ENCODE measurements at regions of chr4 and their contacts with region 1.

Region 1: GRCh38 chr4:55444827-55445226 is 49.1 kb downstream of the TMEM165 start:
- DNase-seq: no peak
- H3K4me3 ChIP-seq: no peak overlapping the region
- H3K27ac ChIP-seq: no peak overlapping the region
- H3K4me1 ChIP-seq: no peaks in the 10 kb centered on the region
- H3K27me3 ChIP-seq: no peaks in the 10 kb centered on the region
- CTCF ChIP-seq: peak; percentile 14 to 44 (median 40); a peak in 3 of 4 replicates
- EP300 ChIP-seq: no peak
- POLR2A ChIP-seq: no peak
- RAD21 ChIP-seq: peak; percentile 50 to 67; a peak in 3 of 4 replicates

Region 2: GRCh38 chr4:55736605-55737183 is 291.9 kb after region 1 on chr4:
- CTCF ChIA-PET with region 1: interaction called, 10 read pairs
- POLR2A ChIA-PET with region 1: no interaction called
- DNase-seq: no peak
- H3K4me3 ChIP-seq: no peak overlapping the region
- H3K27ac ChIP-seq: no peak overlapping the region
- H3K4me1 ChIP-seq: no peaks in the 10 kb centered on the region
- H3K27me3 ChIP-seq: no peaks in the 10 kb centered on the region
- CTCF ChIP-seq: peak in 2 of 3 experiments; percentile 15 to 21; a peak in 2 of 4 replicates
- EP300 ChIP-seq: no peak
- POLR2A ChIP-seq: no peak
- RAD21 ChIP-seq: peak; percentile 62 to 71